ENCODE measurements at regions of chr3 and their contacts with region 1.

Region 1: GRCh38 chr3:8987645-8988383 is 24.5 kb upstream of the RAD18 start:
- DNase-seq: peak; percentile 50 to 88
- H3K4me3 ChIP-seq: peak overlapping the region in 2 of 4 experiments; percentile 11 to 43; a peak in 3 of 8 replicates
- H3K27ac ChIP-seq: no peak overlapping the region
- H3K4me1 ChIP-seq: peaks cover 0 to 5% (median 2%) of the 10 kb centered on the region in 4 experiments; a peak in 6 of 7 replicates
- H3K27me3 ChIP-seq: no peaks in the 10 kb centered on the region
- CTCF ChIP-seq: peak; percentile 78 to 94 (median 79)
- EP300 ChIP-seq: no peak
- POLR2A ChIP-seq: no peak
- RAD21 ChIP-seq: peak; percentile 82 to 87

Region 2: GRCh38 chr3:8970971-8971589 is 16.7 kb before region 1 on chr3:
- CTCF ChIA-PET with region 1: interaction called, 176 read pairs
- POLR2A ChIA-PET with region 1: interaction called, 3 read pairs
- DNase-seq: peak in 1 of 2 experiments; percentile 83
- H3K4me3 ChIP-seq: no peak overlapping the region
- H3K27ac ChIP-seq: no peak overlapping the region
- H3K4me1 ChIP-seq: peaks cover 0 to 6% (median 3%) of the 10 kb centered on the region in 4 experiments; a peak in 4 of 7 replicates
- H3K27me3 ChIP-seq: peaks cover 0 to 2% (median 0%) of the 10 kb centered on the region in 4 experiments; a peak in 1 of 7 replicates
- CTCF ChIP-seq: peak; percentile 72 to 87 (median 83)
- EP300 ChIP-seq: no peak
- POLR2A ChIP-seq: no peak
- RAD21 ChIP-seq: peak; percentile 98

Region 3: DNA sequence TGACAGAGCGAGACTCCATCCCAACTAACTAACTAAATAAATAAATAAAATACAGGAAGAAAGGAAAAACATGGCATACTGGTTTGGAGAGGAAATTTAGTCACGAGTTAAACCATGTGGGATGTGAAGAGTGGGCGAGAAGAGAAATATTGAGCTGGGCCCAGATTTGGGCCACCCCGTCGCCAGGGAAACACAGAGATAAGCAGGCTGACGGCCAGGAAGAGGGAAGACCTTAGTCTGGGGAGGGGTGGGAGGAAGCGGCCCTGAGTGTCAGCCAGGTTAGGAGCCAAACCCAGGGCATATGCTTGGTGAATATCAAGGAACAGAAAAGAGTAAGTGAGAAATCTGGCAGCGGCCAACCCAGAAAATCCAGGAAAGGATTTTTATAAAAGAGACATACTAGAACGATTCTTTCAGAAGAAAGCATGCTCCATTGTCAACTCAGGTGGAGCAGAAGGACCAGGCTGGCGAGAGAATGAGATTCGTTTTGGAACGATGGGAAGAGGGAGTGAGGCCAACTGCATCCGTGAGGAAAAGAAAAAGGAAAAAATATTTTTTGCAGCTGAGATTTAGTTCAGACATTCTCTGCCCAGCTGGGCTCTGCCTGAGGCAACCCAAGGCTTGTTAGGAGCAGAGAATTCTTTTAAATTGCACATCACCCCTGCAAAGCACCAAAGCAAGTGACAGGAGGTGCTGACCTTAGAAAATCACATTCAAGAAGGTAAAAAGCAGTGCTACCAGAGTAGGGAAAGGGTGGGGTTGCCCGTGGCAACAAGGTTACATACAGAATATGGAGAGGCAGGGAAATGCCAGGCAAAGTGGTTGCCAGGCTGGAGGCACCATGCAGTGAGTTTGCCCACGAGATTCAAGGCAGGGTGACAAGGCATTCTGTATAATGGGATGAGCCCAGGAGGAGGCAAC is 34.8 kb after region 1 on chr3:
- CTCF ChIA-PET with region 1: interaction called, 24 read pairs
- POLR2A ChIA-PET with region 1: no interaction called
- DNase-seq: peak in 1 of 2 experiments; percentile 37
- H3K4me3 ChIP-seq: no peak overlapping the region
- H3K27ac ChIP-seq: no peak overlapping the region
- H3K4me1 ChIP-seq: peaks cover 0 to 9% (median 5%) of the 10 kb centered on the region in 4 experiments; a peak in 5 of 7 replicates
- H3K27me3 ChIP-seq: no peaks in the 10 kb centered on the region
- CTCF ChIP-seq: no peak
- EP300 ChIP-seq: no peak
- POLR2A ChIP-seq: no peak
- RAD21 ChIP-seq: no peak

Region 4: GRCh38 chr3:9056581-9056980 is 68.8 kb after region 1 on chr3:
- CTCF ChIA-PET with region 1: interaction called, 56 read pairs
- POLR2A ChIA-PET with region 1: interaction called, 3 read pairs
- DNase-seq: no peak
- H3K4me3 ChIP-seq: no peak overlapping the region
- H3K27ac ChIP-seq: no peak overlapping the region
- H3K4me1 ChIP-seq: 0 out of 7 replicates have a peak, but pooled peaks cover 0 to 2% (median 0%) of the 10 kb centered on the region in 4 experiments
- H3K27me3 ChIP-seq: no peaks in the 10 kb centered on the region
- CTCF ChIP-seq: no peak
- EP300 ChIP-seq: no peak
- POLR2A ChIP-seq: no peak
- RAD21 ChIP-seq: no peak

Region 5: GRCh38 chr3:9111866-9112265 is 124.1 kb after region 1 on chr3:
- CTCF ChIA-PET with region 1: interaction called, 27 read pairs
- POLR2A ChIA-PET with region 1: no interaction called
- DNase-seq: no peak
- H3K4me3 ChIP-seq: no peak overlapping the region
- H3K27ac ChIP-seq: no peak overlapping the region
- H3K4me1 ChIP-seq: peaks cover 0 to 2% (median 0%) of the 10 kb centered on the region in 4 experiments; a peak in 3 of 7 replicates
- H3K27me3 ChIP-seq: no peaks in the 10 kb centered on the region
- CTCF ChIP-seq: no peak
- EP300 ChIP-seq: no peak
- POLR2A ChIP-seq: no peak
- RAD21 ChIP-seq: no peak

Region 6: GRCh38 chr3:9249273-9250192 is 261.7 kb after region 1 on chr3 and contains the start of gene SRGAP3:
- CTCF ChIA-PET with region 1: interaction called, 45 read pairs
- POLR2A ChIA-PET with region 1: interaction called, 5 read pairs
- DNase-seq: peak; percentile 54 to 87
- H3K4me3 ChIP-seq: peak within 1 kb of the TSS; percentile 59 to 74 (median 72)
- H3K27ac ChIP-seq: no peak within 1 kb of the TSS
- H3K4me1 ChIP-seq: peaks cover 7 to 23% (median 16%) of the 10 kb centered on the region in 4 experiments
- H3K27me3 ChIP-seq: no peaks in the 10 kb centered on the region; a peak in 1 of 7 replicates
- CTCF ChIP-seq: peak in 2 of 3 experiments; percentile 34 to 45; a peak in 2 of 4 replicates
- EP300 ChIP-seq: no peak
- POLR2A ChIP-seq: peak in 1 of 2 experiments; percentile 54; a peak in 2 of 3 replicates
- RAD21 ChIP-seq: peak; percentile 36 to 46
- total RNA-seq, gene SRGAP3: 9.4 and 11.4 TPM in 2 replicates

Region 7: GRCh38 chr3:9295008-9295407 is 307.2 kb after region 1 on chr3:
- CTCF ChIA-PET with region 1: interaction called, 200 read pairs
- POLR2A ChIA-PET with region 1: no interaction called
- DNase-seq: no peak
- H3K4me3 ChIP-seq: no peak overlapping the region
- H3K27ac ChIP-seq: no peak overlapping the region
- H3K4me1 ChIP-seq: no peaks in the 10 kb centered on the region
- H3K27me3 ChIP-seq: no peaks in the 10 kb centered on the region
- CTCF ChIP-seq: no peak
- EP300 ChIP-seq: no peak
- POLR2A ChIP-seq: no peak
- RAD21 ChIP-seq: no peak

Measured in H1 (cell line).